Dorsolateral prefrontal cortex (tissue), 120 donors: ENCODE measurements at regions of chr7 and their contacts with region 1.

Region 1: DNA sequence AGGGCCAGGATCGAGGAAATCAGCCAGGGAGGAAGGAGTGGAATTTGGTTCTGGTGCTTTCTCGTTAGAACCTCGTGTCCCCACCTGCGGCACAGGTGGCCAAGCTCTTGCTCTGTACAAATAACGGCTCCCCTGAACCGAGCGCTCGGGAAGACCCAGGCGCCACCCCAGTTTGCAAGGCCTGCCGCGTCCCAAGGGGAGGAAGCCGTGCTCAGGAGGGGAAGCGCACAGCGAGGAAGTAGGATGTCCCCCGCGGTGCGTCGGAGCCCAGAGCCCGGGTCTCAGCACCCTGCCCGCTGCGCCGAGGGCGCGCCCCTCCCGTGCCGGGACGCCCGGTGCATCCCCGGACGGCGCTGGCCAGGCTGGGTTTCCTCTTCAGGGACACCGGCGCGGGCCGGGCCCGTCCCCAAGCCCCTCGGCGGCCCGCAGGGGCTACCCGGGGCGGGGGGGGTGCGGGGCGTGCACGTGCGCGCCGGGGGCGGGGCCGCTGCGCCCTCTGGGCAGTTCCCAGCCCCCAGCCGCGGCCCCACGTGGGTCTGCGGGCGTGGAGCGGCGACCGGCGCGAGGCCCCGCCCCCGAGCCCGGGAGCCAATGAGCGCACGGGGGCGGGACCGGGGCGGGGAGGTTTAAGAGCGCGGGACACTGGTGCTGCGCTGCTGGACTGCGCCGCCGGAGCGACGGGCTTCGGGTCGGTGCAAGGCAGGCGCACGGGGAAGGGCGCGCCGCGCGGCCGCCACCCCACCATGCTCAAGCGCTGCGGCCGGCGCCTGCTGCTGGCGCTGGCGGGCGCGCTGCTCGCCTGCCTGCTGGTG is at the start of gene LFNG:
- DNase-seq: peak; percentile 73 to 93 (median 84)
- H3K4me3 ChIP-seq: peak within 1 kb of the TSS; percentile 30 to 75 (median 64)
- H3K27ac ChIP-seq: peak within 1 kb of the TSS in 14 of 59 donors; percentile 4 to 75 (median 48)
- H3K27me3 ChIP-seq: peaks cover 0 to 30% (median 0%) of the 10 kb centered on the region in 45 donors
- CTCF ChIP-seq: peak in 7 of 56 donors; percentile 9 to 17 (median 14)
- total RNA-seq, gene LFNG: 7.5 to 44.5 (median 15.8) TPM

Region 2: DNA sequence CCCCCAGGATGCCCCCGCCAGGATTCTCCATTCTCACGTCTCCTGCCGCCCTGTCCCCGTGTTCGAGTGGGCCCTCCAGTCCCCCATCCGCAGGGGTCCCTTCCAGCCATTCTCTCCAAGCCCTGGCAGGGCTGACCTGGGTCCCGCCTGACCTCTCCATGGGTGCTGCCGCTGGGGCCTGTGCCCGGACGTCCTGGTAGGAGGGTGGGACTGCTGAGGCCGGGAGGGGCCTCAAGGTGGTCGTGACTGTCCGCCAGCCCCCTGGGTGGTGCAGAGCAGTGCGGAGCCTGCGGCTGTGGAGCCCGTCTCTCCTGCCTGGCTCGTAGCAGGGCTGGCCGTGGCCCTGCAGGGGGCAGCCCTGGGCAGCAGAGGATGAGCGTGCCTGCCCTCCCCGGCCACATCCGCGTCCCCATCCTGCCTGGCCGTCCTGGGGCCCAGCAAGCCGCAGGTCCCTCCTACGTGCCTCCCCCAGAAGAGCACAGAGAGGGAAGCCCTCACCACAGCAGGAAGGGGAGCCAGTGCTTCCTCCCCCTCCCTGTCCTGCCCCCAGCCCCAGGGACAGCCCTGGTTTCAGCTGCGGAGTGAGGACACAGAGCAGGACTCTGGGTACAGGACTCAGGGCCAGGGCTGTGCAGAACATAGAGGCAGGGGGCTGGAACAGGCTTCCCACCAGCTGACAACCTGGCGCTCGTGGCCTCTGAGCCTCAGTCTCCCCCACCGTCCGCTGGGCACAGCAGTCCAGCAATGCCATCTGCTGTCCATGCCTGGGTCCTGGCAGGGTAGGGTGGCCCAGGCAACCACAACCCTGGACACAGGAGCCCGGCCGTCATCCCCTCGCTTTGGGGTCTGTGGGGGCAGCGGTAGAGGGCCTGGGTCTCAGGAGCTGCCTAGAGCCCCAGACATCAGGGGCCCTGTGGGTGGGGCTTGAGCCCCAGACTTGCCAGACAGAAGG is 41.6 kb before region 1 on chr7:
- intact Hi-C with region 1: loop called in 1 of 2 experiments (anchors 5 kb)
- DNase-seq: peak in 5 of 10 donors; percentile 20 to 70 (median 26)
- H3K4me3 ChIP-seq: peak overlapping the region in 17 of 59 donors; percentile 0 to 51 (median 21)
- H3K27ac ChIP-seq: no peak overlapping the region
- H3K27me3 ChIP-seq: peaks cover 0 to 15% (median 0%) of the 10 kb centered on the region in 45 donors
- CTCF ChIP-seq: peak; percentile 25 to 76 (median 64)

Region 3: DNA sequence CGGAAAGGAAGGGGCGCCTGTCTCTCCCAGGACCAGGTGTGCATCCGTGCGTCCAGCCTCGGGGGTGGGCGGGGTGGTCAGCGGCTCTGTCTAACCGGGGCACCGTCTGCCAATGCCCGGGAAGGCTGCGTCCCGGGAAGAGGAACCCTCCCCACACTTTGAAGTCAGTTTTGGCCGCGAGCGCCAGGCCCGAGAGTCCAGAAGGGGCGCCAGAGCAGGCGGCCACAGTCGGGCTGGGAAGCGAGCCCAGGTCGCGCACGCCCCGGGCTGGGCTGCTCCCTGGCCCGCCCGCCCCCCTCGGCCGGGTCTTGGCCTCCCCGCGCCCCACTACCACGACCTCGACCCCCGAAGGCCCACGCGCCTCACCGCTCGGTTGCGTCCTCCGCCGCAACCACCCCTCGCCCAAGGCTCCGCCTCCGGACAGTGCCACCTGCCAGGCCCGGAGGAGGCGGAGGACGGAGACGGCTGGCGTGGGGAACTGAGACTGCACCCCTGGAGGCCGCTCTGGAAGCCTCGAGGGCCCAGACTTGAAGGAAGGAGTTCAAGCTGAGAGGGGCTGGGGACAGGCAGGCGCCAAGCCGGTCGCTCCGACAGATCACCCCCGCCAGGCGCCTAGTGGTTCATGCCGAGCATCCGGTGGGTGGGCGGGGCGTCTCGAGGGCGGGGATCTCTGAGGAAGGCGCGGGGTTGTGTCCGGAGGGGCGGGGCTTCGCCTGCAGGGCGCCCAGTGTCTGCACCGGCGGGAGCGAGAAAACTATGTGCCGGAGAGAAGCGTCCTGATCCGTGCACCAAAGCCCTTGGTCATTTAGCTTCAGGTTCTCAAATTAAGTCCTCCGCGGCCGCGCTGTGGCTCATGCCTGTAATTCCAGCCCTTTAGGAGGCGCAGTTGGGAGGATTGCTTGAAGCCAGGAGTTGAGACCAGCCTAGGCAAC is 36.1 kb after region 1 on chr7 and contains the start of gene BRAT1:
- intact Hi-C with region 1: loop called (anchors 1 to 2 kb)
- DNase-seq: peak; percentile 92 to 98 (median 96)
- H3K4me3 ChIP-seq: peak within 1 kb of the TSS; percentile 67 to 96 (median 90)
- H3K27ac ChIP-seq: peak within 1 kb of the TSS; percentile 89 to 100 (median 99)
- H3K27me3 ChIP-seq: no peaks in the 10 kb centered on the region
- CTCF ChIP-seq: peak in 41 of 56 donors; percentile 4 to 63 (median 30)
- total RNA-seq, gene BRAT1: 16.7 to 38.4 (median 24.9) TPM